B cell (primary cell): ENCODE measurements at regions of chr19 and their contacts with region 1.

Region 1: GRCh38 chr19:35247526-35248306 is 1.1 kb upstream of the LSR start:
- DNase-seq: peak; percentile 83
- ATAC-seq: peak; percentile 41
- H3K4me3 ChIP-seq: peak overlapping the region; percentile 30 to 93 (median 76)
- H3K4me3 Mint-ChIP-seq: peak overlapping the region; percentile 89
- H3K27ac ChIP-seq: peak overlapping the region; percentile 77 to 86
- H3K27ac Mint-ChIP-seq: peak overlapping the region; percentile 98
- H3K4me1 ChIP-seq: peaks cover 13 to 30% of the 10 kb centered on the region in 2 donors
- H3K4me1 Mint-ChIP-seq: peaks cover 24% of the 10 kb centered on the region
- H3K27me3 ChIP-seq: peaks cover 0 to 6% (median 0%) of the 10 kb centered on the region in 4 experiments
- H3K27me3 Mint-ChIP-seq: peaks cover 12% of the 10 kb centered on the region
- CTCF ChIP-seq: peak; percentile 72

Region 2: DNA sequence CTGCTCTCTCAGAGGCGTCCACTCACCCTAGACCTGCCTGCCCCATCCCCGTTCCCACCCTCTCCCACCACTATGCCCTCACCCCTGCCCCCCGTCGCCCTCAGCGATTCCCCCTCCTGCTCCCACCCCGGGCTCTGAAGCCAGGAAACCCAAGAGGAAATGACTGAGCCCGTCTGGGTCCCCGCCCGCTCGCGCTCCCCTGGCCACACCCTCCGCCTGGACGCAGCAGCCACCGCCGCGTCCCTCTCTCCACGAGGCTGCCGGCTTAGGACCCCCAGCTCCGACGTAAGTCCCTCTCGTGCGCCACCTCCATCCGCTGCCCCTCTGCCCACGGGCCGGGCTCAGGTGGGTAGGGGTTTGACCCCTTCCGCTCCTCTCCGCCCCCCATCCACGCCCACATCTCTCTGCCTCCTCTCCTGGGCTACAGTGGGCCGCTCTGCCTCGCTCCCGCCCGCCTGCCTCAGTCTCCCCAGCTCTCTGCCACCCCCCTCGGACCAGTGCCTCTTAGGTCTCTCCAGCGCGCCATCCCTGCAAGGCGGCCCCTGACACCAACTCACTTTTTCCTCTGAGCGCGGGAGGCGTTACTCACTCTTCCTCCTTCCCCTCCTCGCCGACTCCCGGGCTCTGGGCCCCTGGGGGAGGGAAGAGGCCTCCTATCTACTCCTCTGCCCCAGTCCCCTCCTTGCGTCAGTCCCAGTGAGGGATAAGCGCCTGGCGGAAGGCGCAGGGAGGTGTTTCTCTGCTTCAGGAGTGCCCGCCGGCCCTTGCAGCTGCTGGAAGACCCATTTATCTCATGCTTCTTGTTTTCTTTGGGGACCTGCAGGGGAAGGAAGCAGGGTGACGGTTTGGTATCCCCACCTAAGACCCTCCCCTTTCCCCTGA is 93.0 kb before region 1 on chr19 and contains the start of gene FXYD5:
- CTCF ChIA-PET with region 1: interaction called, 3 read pairs
- POLR2A ChIA-PET with region 1: interaction called, 3 read pairs
- intact Hi-C with region 1: loop called (anchors 2 kb)
- DNase-seq: peak; percentile 64
- ATAC-seq: peak; percentile 72
- H3K4me3 ChIP-seq: peak within 1 kb of the TSS; percentile 51 to 93 (median 90)
- H3K4me3 Mint-ChIP-seq: peak within 1 kb of the TSS; percentile 100
- H3K27ac ChIP-seq: peak within 1 kb of the TSS; percentile 43 to 85
- H3K27ac Mint-ChIP-seq: peak within 1 kb of the TSS; percentile 97
- H3K4me1 ChIP-seq: peaks cover 20 to 25% of the 10 kb centered on the region in 2 donors
- H3K4me1 Mint-ChIP-seq: peaks cover 49% of the 10 kb centered on the region
- H3K27me3 ChIP-seq: peaks cover 0 to 3% (median 0%) of the 10 kb centered on the region in 4 experiments
- H3K27me3 Mint-ChIP-seq: no peaks in the 10 kb centered on the region
- CTCF ChIP-seq: no peak
- total RNA-seq, gene FXYD5: 293 and 310 TPM in 2 replicates

Region 3: GRCh38 chr19:35177377-35178274 is 70.1 kb before region 1 on chr19:
- CTCF ChIA-PET with region 1: no interaction called
- POLR2A ChIA-PET with region 1: no interaction called
- intact Hi-C with region 1: no loop called
- DNase-seq: no peak
- ATAC-seq: no peak
- H3K4me3 ChIP-seq: no peak overlapping the region
- H3K4me3 Mint-ChIP-seq: no peak overlapping the region
- H3K27ac ChIP-seq: no peak overlapping the region
- H3K27ac Mint-ChIP-seq: peak overlapping the region; percentile 26
- H3K4me1 ChIP-seq: no peaks in the 10 kb centered on the region
- H3K4me1 Mint-ChIP-seq: peaks cover 2% of the 10 kb centered on the region
- H3K27me3 ChIP-seq: no peaks in the 10 kb centered on the region
- H3K27me3 Mint-ChIP-seq: no peaks in the 10 kb centered on the region
- CTCF ChIP-seq: no peak

Region 4: DNA sequence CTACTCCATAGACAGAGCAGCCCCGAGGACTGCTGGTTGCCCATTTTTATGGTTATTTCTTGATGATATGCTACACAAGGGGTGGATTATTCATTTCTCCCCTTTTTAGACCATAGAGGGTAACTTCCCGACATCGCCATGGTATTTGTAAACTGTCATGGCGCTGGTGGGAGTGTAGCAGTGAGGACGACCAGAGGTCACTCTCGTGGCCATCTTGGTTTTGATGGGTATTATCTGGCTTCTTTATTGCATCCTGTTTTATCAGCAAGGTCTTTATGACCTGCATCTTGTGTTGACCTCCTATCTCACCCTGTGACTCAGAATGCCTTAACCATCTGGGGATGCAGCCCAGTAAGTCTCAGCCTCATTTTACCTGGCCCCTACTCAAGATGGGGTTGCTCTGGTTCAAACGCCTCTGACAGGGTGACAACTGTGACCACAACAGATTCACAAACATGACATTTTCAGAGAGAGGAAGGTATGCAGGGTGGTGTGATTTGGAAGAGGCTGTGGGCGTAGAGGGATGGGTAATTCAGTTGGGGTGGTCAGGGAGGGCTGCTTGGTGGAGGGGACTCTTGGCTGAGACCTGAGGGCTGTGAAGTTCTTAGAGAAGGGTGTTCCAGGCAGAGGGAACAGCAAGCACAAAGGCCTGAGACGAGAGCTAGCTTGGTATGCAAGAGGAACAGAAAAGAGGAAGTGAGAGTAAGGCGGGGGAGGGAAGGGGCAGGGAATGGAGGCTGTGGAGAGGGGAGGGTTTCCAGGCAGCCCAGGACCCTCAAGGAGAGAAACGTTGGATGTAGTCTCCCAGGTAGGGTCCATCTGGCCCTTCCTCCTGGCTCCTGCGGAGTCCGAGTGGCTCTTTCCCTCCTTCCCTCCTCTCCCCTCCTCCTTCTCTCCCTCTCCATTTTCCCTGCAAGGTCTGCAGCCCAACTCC is 42.6 kb before region 1 on chr19:
- CTCF ChIA-PET with region 1: interaction called, 3 read pairs
- POLR2A ChIA-PET with region 1: interaction called, 3 read pairs
- intact Hi-C with region 1: loop called (anchors 2 kb)
- DNase-seq: peak; percentile 91
- ATAC-seq: peak; percentile 74
- H3K4me3 ChIP-seq: peak overlapping the region in 3 of 5 experiments; percentile 7 to 45 (median 13)
- H3K4me3 Mint-ChIP-seq: peak overlapping the region; percentile 78
- H3K27ac ChIP-seq: peak overlapping the region; percentile 93 to 95
- H3K27ac Mint-ChIP-seq: peak overlapping the region; percentile 96
- H3K4me1 ChIP-seq: peaks cover 65 to 68% of the 10 kb centered on the region in 2 donors
- H3K4me1 Mint-ChIP-seq: peaks cover 59% of the 10 kb centered on the region
- H3K27me3 ChIP-seq: no peaks in the 10 kb centered on the region
- H3K27me3 Mint-ChIP-seq: no peaks in the 10 kb centered on the region
- CTCF ChIP-seq: no peak

Region 5: DNA sequence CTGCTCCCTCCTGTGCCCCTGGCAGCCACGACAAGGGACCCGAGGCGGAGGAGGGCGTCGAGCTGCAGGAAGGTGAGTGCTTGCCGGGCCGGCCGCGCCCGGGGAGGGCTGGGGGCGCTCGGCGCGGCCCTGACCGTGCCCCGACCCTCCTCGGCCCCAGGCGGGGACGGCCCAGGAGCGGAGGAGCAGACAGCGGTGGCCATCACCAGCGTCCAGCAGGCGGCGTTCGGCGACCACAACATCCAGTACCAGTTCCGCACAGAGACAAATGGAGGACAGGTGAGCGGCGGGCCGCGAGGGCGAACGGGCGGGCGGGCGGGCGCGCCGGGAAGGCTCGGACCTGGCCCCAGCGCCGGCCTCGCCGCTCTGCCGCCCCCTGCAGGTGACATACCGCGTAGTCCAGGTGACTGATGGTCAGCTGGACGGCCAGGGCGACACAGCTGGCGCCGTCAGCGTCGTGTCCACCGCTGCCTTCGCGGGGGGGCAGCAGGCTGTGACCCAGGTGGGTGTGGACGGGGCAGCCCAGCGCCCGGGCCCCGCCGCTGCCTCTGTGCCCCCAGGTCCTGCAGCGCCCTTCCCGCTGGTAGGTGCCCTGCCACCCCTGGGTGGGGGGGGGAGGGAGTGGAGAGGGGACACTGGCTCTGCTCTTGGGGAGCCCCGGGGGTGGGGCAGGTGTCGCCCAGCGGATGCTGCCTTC is 21.9 kb after region 1 on chr19:
- CTCF ChIA-PET with region 1: interaction called, 7 read pairs
- POLR2A ChIA-PET with region 1: interaction called, 3 read pairs
- intact Hi-C with region 1: loop called (anchors 1 kb)
- DNase-seq: peak; percentile 92
- ATAC-seq: peak; percentile 71
- H3K4me3 ChIP-seq: peak overlapping the region in 4 of 5 experiments; percentile 24 to 62 (median 54)
- H3K4me3 Mint-ChIP-seq: peak overlapping the region; percentile 84
- H3K27ac ChIP-seq: no peak overlapping the region
- H3K27ac Mint-ChIP-seq: peak overlapping the region; percentile 87
- H3K4me1 ChIP-seq: peaks cover 39 to 57% of the 10 kb centered on the region in 2 donors
- H3K4me1 Mint-ChIP-seq: peaks cover 62% of the 10 kb centered on the region
- H3K27me3 ChIP-seq: no peaks in the 10 kb centered on the region
- H3K27me3 Mint-ChIP-seq: no peaks in the 10 kb centered on the region
- CTCF ChIP-seq: peak; percentile 77

Region 6: GRCh38 chr19:35592226-35592625 is 344.5 kb after region 1 on chr19:
- CTCF ChIA-PET with region 1: no interaction called
- POLR2A ChIA-PET with region 1: interaction called, 11 read pairs
- intact Hi-C with region 1: no loop called
- DNase-seq: peak; percentile 64
- ATAC-seq: no peak
- H3K4me3 ChIP-seq: no peak overlapping the region
- H3K4me3 Mint-ChIP-seq: no peak overlapping the region
- H3K27ac ChIP-seq: no peak overlapping the region
- H3K27ac Mint-ChIP-seq: no peak overlapping the region
- H3K4me1 ChIP-seq: no peaks in the 10 kb centered on the region
- H3K4me1 Mint-ChIP-seq: no peaks in the 10 kb centered on the region
- H3K27me3 ChIP-seq: peaks cover 0 to 7% (median 0%) of the 10 kb centered on the region in 4 experiments
- H3K27me3 Mint-ChIP-seq: peaks cover 16% of the 10 kb centered on the region
- CTCF ChIP-seq: peak; percentile 59